ENCODE measurements at regions of chr11 and their contacts with region 1.

Region 1: DNA sequence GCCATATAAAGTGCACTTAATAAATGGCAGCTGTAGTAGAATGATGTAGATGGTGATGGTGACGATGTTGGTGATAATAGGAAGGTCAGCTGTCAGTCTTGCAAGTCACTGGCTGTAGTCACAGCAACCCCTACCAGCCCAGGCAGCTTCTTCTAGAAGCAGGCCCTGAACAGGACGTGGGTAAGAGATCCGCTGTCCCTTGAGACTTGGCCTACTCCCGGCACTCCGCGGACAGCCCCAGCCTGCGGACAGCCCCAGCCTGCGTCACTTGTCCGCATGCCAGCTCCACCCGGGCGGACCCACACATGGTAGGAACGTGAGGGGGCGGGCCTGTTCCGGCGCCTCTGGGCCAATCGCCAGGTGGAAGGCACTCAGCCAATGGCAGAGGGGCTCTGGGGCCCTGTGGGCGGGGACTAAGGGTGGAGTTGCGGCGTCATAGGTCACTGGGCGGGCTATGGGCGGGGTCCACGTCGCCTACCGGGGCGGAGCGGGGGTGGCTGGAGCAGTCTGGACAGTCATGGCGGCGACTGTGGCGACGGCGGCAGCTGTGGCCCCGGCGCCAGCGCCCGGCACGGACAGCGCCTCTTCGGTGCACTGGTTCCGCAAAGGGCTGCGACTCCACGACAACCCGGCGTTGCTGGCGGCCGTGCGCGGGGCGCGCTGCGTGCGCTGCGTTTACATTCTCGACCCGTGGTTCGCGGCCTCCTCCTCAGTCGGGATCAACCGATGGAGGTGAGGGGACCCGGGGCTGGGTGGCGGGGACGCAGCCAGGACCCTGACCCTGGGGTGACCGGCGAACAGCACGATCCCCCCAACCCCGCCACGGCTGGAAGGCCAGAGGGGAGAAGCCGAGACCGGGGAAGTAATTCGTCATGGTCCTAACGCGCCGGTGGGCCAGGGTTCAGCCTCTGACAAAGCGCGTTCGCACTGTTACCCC is at the start of gene CRY2:
- DNase-seq: peak; percentile 99
- ATAC-seq: peak; percentile 89
- H3K4me3 ChIP-seq: peak within 1 kb of the TSS; percentile 76 to 93 (median 90)
- H3K4me3 Mint-ChIP-seq: peak within 1 kb of the TSS; percentile 87
- H3K27ac ChIP-seq: peak within 1 kb of the TSS; percentile 83 to 93
- H3K27ac Mint-ChIP-seq: peak within 1 kb of the TSS; percentile 95
- H3K4me1 ChIP-seq: peaks cover 32 to 43% of the 10 kb centered on the region in 2 donors
- H3K4me1 Mint-ChIP-seq: peaks cover 64% of the 10 kb centered on the region
- H3K27me3 ChIP-seq: no peaks in the 10 kb centered on the region
- H3K27me3 Mint-ChIP-seq: no peaks in the 10 kb centered on the region
- CTCF ChIP-seq: no peak
- total RNA-seq, gene CRY2: 65.1 and 77.9 TPM in 2 replicates

Region 2: DNA sequence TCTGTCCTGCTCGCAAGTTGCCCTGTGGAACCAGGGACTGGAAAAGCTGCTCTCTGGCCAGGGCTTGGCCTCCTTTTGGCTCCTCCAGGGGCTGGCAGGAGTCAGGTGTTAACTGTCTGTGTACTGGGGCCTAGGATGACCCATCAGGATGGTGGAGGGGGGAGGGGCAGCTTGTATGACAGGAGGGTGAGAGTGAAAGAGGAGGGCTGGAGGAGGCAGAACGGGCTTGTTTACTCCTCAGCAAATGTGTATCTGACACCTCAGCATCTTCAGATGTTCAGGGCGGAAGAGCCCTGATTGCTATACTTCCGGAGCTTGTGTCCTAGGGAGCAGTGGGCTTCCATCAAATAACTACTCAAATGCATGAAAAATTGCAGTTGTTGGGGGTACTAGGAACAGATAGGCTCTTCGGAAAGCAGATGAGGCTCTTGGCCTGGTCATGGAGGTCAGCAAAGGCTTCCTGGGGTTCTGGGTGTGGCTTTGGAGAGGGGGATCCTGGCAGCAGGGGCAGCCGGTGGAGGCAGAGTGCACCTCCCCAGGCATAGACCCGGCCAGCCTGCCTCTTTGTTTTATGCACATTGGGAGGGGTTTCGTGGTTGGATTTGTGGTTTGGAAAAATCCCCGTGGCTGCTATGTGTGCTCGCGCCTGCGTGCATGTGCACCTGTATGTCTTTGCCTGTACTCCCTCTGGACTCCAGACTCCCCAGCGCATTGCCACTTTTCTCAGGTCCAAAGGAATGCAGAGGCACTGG is 1250.5 kb before region 1 on chr11:
- CTCF ChIA-PET with region 1: no interaction called
- POLR2A ChIA-PET with region 1: no interaction called
- intact Hi-C with region 1: loop called (anchors 10 kb)
- DNase-seq: peak; percentile 90
- ATAC-seq: peak; percentile 25
- H3K4me3 ChIP-seq: peak overlapping the region in 2 of 5 experiments; percentile 9 to 28
- H3K4me3 Mint-ChIP-seq: peak overlapping the region; percentile 77
- H3K27ac ChIP-seq: peak overlapping the region; percentile 78 to 85
- H3K27ac Mint-ChIP-seq: peak overlapping the region; percentile 92
- H3K4me1 ChIP-seq: peaks cover 69 to 92% of the 10 kb centered on the region in 2 donors
- H3K4me1 Mint-ChIP-seq: peaks cover 94% of the 10 kb centered on the region
- H3K27me3 ChIP-seq: no peaks in the 10 kb centered on the region
- H3K27me3 Mint-ChIP-seq: no peaks in the 10 kb centered on the region
- CTCF ChIP-seq: no peak

Region 3: DNA sequence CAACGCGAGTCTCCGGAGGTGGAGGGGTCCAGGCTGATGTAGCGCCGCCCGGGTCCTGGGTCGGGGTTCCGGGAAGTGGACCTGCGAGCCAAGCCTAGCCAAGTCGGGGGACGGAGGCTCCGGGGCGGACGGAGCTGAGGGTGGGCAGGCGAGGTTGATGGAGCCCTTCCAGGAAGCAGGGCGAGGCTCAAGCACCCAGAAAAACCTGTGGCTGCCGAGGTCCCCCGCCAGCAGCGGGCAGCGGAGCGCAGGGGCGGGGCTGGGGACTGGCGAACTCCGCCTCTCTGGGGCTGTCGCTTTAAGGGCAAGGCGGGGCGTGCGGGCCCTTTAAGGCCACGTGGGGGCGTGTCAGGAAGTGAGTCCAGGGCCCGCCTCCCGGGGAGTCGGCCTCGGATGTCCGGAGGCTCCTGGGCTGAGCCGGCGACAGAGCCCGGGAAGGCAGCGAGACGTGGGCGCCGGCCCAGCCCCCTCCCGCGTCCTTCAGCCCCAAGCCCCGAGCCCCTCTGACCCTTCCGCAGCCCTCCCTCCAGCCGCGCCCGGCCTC is 42.4 kb before region 1 on chr11 and contains the start of gene SLC35C1:
- CTCF ChIA-PET with region 1: interaction called, 11 read pairs
- POLR2A ChIA-PET with region 1: interaction called, 5 read pairs
- intact Hi-C with region 1: loop called (anchors 1 kb)
- DNase-seq: peak; percentile 95
- ATAC-seq: peak; percentile 96
- H3K4me3 ChIP-seq: peak within 1 kb of the TSS; percentile 42 to 96 (median 92)
- H3K4me3 Mint-ChIP-seq: peak within 1 kb of the TSS; percentile 94
- H3K27ac ChIP-seq: peak within 1 kb of the TSS; percentile 62 to 67
- H3K27ac Mint-ChIP-seq: peak within 1 kb of the TSS; percentile 91
- H3K4me1 ChIP-seq: peaks cover 27 to 35% of the 10 kb centered on the region in 2 donors
- H3K4me1 Mint-ChIP-seq: peaks cover 41% of the 10 kb centered on the region
- H3K27me3 ChIP-seq: no peaks in the 10 kb centered on the region
- H3K27me3 Mint-ChIP-seq: no peaks in the 10 kb centered on the region
- CTCF ChIP-seq: no peak
- total RNA-seq, gene SLC35C1: 12.5 and 13.8 TPM in 2 replicates

Region 4: DNA sequence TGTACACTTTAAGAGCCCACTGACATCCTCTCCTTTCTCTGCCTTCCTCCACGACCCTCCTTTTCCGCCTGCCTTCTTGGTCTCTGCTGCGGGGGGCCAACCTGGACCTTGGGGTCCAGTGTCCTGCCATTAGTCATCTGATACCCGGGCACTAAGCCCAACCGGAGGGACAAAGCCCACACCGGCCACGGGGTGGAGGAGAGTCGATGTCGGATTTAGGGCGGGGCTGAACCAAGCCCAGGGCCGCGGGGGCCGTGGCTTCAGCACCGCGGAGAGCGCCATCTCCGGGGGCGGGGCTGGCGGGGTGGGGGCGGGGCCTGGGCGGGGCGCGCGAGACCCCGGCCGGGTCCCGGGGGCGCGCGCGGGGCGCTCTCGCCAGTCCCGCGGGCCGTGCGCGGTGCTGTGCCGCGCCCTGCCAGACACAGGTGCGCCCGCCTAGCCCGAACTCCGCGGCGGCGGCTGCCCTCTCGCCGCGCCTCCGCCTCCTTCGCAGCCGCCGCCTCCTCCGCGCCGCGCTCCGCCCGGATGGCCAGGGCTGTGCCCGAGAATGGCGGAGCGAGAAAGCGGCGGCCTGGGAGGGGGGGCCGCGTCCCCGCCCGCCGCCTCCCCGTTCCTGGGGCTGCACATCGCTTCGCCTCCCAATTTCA is 38.2 kb after region 1 on chr11 and contains the start of gene MAPK8IP1:
- CTCF ChIA-PET with region 1: interaction called, 3 read pairs
- POLR2A ChIA-PET with region 1: interaction called, 10 read pairs
- intact Hi-C with region 1: loop called (anchors 1 kb)
- DNase-seq: peak; percentile 77
- ATAC-seq: peak; percentile 91
- H3K4me3 ChIP-seq: peak within 1 kb of the TSS in 4 of 5 experiments; percentile 32 to 59 (median 50)
- H3K4me3 Mint-ChIP-seq: peak within 1 kb of the TSS; percentile 82
- H3K27ac ChIP-seq: no peak within 1 kb of the TSS
- H3K27ac Mint-ChIP-seq: peak within 1 kb of the TSS; percentile 77
- H3K4me1 ChIP-seq: peaks cover 11 to 12% of the 10 kb centered on the region in 2 donors
- H3K4me1 Mint-ChIP-seq: peaks cover 12% of the 10 kb centered on the region
- H3K27me3 ChIP-seq: peaks cover 0 to 13% (median 0%) of the 10 kb centered on the region in 4 experiments
- H3K27me3 Mint-ChIP-seq: no peaks in the 10 kb centered on the region
- CTCF ChIP-seq: no peak
- total RNA-seq, gene MAPK8IP1: 1.4 and 2.1 TPM in 2 replicates

Region 5: GRCh38 chr11:45930031-45930794 is 83.0 kb after region 1 on chr11:
- CTCF ChIA-PET with region 1: interaction called, 5 read pairs
- POLR2A ChIA-PET with region 1: interaction called, 12 read pairs
- intact Hi-C with region 1: loop called (anchors 1 kb)
- DNase-seq: peak; percentile 94
- ATAC-seq: peak; percentile 77
- H3K4me3 ChIP-seq: peak overlapping the region; percentile 26 to 95 (median 79)
- H3K4me3 Mint-ChIP-seq: peak overlapping the region; percentile 95
- H3K27ac ChIP-seq: peak overlapping the region; percentile 92 to 93
- H3K27ac Mint-ChIP-seq: peak overlapping the region; percentile 92
- H3K4me1 ChIP-seq: peaks cover 65 to 84% of the 10 kb centered on the region in 2 donors
- H3K4me1 Mint-ChIP-seq: peaks cover 93% of the 10 kb centered on the region
- H3K27me3 ChIP-seq: no peaks in the 10 kb centered on the region
- H3K27me3 Mint-ChIP-seq: no peaks in the 10 kb centered on the region
- CTCF ChIP-seq: no peak

Region 6: DNA sequence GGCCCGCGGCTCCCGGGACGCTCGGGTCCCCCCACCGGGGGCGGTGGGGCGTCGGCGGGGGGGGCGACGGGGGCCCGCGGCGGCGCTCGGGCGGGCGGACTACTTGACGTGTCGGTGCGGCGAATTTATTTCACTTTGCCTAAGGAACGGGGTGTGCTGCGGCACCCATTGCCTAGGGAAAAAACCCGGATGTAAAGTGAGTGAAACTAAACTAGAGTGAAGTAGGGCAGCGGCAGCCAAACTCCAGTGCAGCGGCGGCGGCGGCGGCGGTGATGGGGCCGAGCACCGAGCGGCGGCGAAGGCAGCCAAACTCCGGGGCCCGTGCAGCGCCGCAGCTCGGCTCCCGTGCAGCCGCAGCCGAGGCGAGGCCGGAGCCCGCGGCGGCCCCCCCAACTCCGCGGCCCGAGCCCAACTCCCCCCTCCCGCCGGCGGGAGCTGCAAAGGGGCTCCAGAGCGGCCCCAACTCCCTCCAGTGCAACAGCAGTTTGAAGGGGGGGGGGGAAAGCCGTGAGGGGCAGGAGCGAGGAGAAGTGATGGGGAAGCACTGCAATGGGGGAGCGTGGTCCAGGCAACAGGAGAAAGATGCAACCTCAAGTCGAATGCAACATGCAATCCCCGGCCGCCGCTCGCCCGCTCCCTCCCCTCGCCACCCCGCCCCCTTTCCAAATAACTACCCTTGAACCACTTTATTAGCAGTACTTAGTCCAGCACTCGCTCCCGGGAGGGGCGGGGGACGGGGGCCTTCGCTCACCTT is 274.7 kb after region 1 on chr11:
- CTCF ChIA-PET with region 1: no interaction called
- POLR2A ChIA-PET with region 1: interaction called, 9 read pairs
- intact Hi-C with region 1: loop called (anchors 2 kb)
- DNase-seq: peak; percentile 91
- ATAC-seq: peak; percentile 47
- H3K4me3 ChIP-seq: peak overlapping the region; percentile 38 to 89 (median 78)
- H3K4me3 Mint-ChIP-seq: peak overlapping the region; percentile 93
- H3K27ac ChIP-seq: peak overlapping the region in 1 of 2 donors; percentile 61
- H3K27ac Mint-ChIP-seq: peak overlapping the region; percentile 97
- H3K4me1 ChIP-seq: peaks cover 21 to 22% of the 10 kb centered on the region in 2 donors
- H3K4me1 Mint-ChIP-seq: peaks cover 29% of the 10 kb centered on the region
- H3K27me3 ChIP-seq: no peaks in the 10 kb centered on the region
- H3K27me3 Mint-ChIP-seq: no peaks in the 10 kb centered on the region
- CTCF ChIP-seq: no peak

Measured in B cell (primary cell).